ENCODE measurements at regions of chrX and their contacts with region 1.

Region 1: GRCh38 chrX:40887476-40887875 is 152.1 kb upstream of the MED14 start:
- DNase-seq: no peak
- H3K4me3 ChIP-seq: no peak overlapping the region
- H3K27ac ChIP-seq: no peak overlapping the region
- H3K4me1 ChIP-seq: no peaks in the 10 kb centered on the region
- H3K27me3 ChIP-seq: no peaks in the 10 kb centered on the region
- CTCF ChIP-seq: no peak
- POLR2A ChIP-seq: no peak

Region 2: GRCh38 chrX:41108007-41108406 is 220.5 kb after region 1 on chrX:
- intact Hi-C with region 1: loop called (anchors 10 kb)
- DNase-seq: no peak
- H3K4me3 ChIP-seq: no peak overlapping the region
- H3K27ac ChIP-seq: no peak overlapping the region
- H3K4me1 ChIP-seq: peaks cover 10% of the 10 kb centered on the region
- H3K27me3 ChIP-seq: no peaks in the 10 kb centered on the region
- CTCF ChIP-seq: no peak
- POLR2A ChIP-seq: no peak

Measured in vagina (tissue), 2 donors.